Pancreas (tissue), 10 donors: ENCODE measurements at regions of chr16 and their contacts with region 1.

Region 1: GRCh38 chr16:68031951-68032350 is 8.9 kb downstream of the DUS2 start:
- DNase-seq: no peak
- ATAC-seq: no peak
- H3K4me3 ChIP-seq: no peak overlapping the region
- H3K27ac ChIP-seq: no peak overlapping the region
- H3K4me1 ChIP-seq: no peaks in the 10 kb centered on the region
- H3K27me3 ChIP-seq: no peaks in the 10 kb centered on the region
- CTCF ChIP-seq: no peak

Region 2: DNA sequence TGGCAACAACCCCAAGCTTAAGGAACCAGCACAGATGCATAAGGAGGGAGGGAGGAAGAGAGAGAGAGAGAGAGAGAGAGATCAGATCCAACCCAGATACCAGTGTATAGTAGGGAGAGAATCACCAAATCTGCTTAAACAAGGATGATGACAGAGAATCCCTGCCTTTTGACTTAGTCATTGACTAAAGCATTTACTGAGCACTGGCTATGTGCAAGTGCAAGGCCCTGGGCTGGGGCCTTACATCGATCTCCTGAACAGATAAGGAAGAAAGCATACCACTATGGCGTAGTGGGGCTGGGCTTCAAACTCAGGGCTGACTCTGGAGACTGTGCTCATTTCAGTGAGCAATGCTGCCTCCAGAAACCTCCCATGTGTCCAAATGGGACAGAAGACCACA is 209.4 kb before region 1 on chr16:
- intact Hi-C with region 1: loop called in 1 of 3 experiments (anchors 10 kb)
- DNase-seq: no peak
- ATAC-seq: no peak
- H3K4me3 ChIP-seq: no peak overlapping the region
- H3K27ac ChIP-seq: no peak overlapping the region
- H3K4me1 ChIP-seq: no peaks in the 10 kb centered on the region
- H3K27me3 ChIP-seq: no peaks in the 10 kb centered on the region
- CTCF ChIP-seq: no peak

Region 3: GRCh38 chr16:67883872-67884261 is 148.1 kb before region 1 on chr16:
- intact Hi-C with region 1: loop called in 1 of 3 experiments (anchors 10 kb)
- DNase-seq: peak in 5 of 6 donors; percentile 50 to 90 (median 70)
- ATAC-seq: peak; percentile 80 to 86 (median 84)
- H3K4me3 ChIP-seq: no peak overlapping the region
- H3K27ac ChIP-seq: no peak overlapping the region
- H3K4me1 ChIP-seq: no peaks in the 10 kb centered on the region
- H3K27me3 ChIP-seq: no peaks in the 10 kb centered on the region
- CTCF ChIP-seq: peak; percentile 69 to 81 (median 78)